Activated CD8-positive, alpha-beta memory T cell treated with anti-CD3 and anti-CD28 coated beads, Interleukin-2, amount 10 ng/mL, durations not matched to agents 7 days and 5 days (primary cell): ENCODE measurements at regions of chr22 and their contacts with region 1.

Region 1: DNA sequence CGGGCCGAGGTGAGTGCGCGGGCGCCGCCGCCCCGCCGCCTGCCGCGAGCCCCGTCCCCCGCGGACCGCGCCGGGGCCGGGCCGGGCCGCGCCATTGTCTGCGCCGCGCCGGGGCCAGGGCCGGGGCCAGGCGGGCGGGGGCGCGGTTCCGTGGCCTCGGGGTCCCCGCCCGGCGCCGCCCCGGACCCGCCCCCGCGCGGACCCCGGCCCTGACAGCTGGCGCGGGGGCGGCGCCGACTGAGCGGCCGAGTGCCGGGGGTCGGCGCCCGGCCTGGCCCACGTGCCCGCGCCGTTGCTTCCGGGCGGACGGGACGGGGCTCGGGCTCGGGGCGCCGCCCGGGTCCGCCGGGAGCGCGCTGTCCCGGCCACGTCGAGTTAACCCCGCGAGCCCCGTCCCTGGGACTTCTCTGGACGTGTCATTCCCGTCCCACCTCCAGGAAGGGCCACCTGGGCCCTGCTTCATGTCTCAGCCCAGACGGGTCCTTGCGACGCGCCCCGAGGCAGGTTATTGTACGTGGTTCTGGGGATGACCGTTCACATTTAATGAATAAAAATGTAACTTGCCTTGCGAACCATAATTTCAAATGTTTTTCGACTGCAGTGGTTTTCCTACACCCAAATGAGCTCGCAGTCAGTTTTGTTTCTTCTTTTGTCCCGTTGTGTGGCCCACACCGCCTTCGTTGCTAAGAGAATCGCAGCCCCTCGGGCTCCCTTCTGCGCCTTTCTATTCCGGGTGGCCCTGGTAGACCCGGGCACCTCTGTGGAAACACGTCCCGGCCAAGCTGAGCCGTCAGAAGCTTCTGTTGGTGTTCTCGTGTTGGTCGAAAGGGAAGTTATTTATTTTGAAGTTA is 562 bp downstream of the ZBED4 start:
- DNase-seq: peak; percentile 62
- ATAC-seq: peak; percentile 26
- H3K4me3 Mint-ChIP-seq: peak overlapping the region; percentile 86
- H3K27ac Mint-ChIP-seq: peak overlapping the region; percentile 93
- H3K4me1 Mint-ChIP-seq: peaks cover 53% of the 10 kb centered on the region
- H3K27me3 Mint-ChIP-seq: peaks cover 18% of the 10 kb centered on the region

Region 2: GRCh38 chr22:49815641-49816071 is 38.5 kb before region 1 on chr22:
- CTCF ChIA-PET with region 1: no interaction called
- DNase-seq: peak; percentile 63
- ATAC-seq: peak; percentile 79
- H3K4me3 Mint-ChIP-seq: no peak overlapping the region
- H3K27ac Mint-ChIP-seq: peak overlapping the region; percentile 17
- H3K4me1 Mint-ChIP-seq: peaks cover 54% of the 10 kb centered on the region
- H3K27me3 Mint-ChIP-seq: no peaks in the 10 kb centered on the region

Region 3: DNA sequence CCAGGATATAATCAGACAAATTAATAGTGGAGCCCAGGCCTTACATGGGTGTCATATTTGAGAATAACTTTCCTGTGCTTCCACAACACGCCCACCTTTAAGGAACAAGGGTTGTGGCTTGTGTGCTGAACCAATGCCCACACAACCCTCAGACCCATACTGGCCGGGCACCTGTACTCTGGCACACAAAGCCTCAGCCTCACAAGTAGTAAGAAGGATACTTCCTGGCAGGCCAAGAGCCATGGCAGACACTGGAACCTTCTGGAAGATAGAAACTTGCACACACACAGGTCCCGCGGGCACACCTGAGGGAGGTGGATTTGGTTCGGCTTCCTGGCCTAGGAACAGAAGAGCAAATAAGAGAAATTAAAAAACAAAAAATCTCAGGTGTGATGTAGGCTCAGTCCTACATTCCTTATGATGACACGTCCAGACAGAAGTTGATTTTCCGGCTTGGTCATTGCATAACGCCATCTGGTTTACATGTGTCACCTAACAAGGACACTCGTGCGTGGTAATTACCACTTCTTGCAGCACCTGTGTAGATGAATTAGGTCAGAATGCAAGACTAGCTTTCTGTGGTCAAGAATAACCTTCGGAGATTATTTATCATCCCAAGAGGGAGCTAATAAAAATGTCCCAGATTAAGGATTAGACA is 20.7 kb before region 1 on chr22:
- CTCF ChIA-PET with region 1: no interaction called
- DNase-seq: no peak
- ATAC-seq: no peak
- H3K4me3 Mint-ChIP-seq: no peak overlapping the region
- H3K27ac Mint-ChIP-seq: no peak overlapping the region
- H3K4me1 Mint-ChIP-seq: peaks cover 30% of the 10 kb centered on the region
- H3K27me3 Mint-ChIP-seq: peaks cover 3% of the 10 kb centered on the region

Region 4: GRCh38 chr22:49880281-49880680 is 26.1 kb after region 1 on chr22:
- CTCF ChIA-PET with region 1: interaction called, 12 read pairs
- DNase-seq: peak; percentile 76
- ATAC-seq: peak; percentile 86
- H3K4me3 Mint-ChIP-seq: peak overlapping the region; percentile 58
- H3K27ac Mint-ChIP-seq: peak overlapping the region; percentile 90
- H3K4me1 Mint-ChIP-seq: peaks cover 39% of the 10 kb centered on the region
- H3K27me3 Mint-ChIP-seq: no peaks in the 10 kb centered on the region